Activated CD4-positive, alpha-beta memory T cell treated with anti-CD3 and anti-CD28 coated beads for 36 hours (primary cell): ENCODE measurements at regions of chr5 and their contacts with region 1.

Region 1: DNA sequence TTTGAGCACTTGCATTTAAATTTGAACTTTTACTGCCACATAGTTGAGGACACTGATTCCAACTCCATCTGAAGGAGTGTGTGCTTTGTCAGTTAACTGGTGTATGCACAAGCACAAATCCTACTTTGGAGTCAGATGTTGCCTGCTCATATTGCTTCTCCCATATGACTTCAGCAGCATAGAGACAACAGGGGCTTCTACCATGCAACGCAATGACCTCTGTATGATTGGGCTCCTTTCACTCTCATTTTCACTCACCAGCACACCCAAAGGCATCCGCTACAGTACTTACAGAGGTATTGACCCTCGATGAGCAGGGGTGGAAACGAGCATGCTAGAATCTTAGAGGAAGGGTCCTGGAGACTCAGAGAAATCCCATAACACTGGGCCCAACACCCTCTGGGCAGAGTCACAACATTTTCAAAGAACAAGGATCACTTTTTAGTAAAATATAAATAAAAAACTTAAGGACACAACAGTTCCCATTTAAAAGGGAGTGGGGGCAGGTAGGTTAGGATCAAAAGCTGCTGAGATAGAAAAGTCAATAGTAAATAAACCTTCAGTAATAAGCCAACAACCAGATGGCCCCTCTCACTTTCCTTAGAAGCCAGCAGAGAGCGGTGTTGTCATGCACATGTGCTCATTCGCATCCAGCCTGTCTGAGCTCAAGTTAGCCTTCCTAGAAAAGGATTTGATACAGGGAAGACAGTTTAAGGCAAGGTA is 203.8 kb downstream of the SNCAIP start:
- DNase-seq: peak; percentile 10
- H3K4me3 Mint-ChIP-seq: no peak overlapping the region
- H3K27ac Mint-ChIP-seq: no peak overlapping the region
- H3K4me1 Mint-ChIP-seq: no peaks in the 10 kb centered on the region
- H3K27me3 Mint-ChIP-seq: no peaks in the 10 kb centered on the region

Region 2: GRCh38 chr5:122392824-122393223 is 123.0 kb before region 1 on chr5:
- CTCF ChIA-PET with region 1: no interaction called
- POLR2A ChIA-PET with region 1: no interaction called
- intact Hi-C with region 1: no loop called
- DNase-seq: no peak
- H3K4me3 Mint-ChIP-seq: no peak overlapping the region
- H3K27ac Mint-ChIP-seq: no peak overlapping the region
- H3K4me1 Mint-ChIP-seq: no peaks in the 10 kb centered on the region
- H3K27me3 Mint-ChIP-seq: no peaks in the 10 kb centered on the region

Region 3: DNA sequence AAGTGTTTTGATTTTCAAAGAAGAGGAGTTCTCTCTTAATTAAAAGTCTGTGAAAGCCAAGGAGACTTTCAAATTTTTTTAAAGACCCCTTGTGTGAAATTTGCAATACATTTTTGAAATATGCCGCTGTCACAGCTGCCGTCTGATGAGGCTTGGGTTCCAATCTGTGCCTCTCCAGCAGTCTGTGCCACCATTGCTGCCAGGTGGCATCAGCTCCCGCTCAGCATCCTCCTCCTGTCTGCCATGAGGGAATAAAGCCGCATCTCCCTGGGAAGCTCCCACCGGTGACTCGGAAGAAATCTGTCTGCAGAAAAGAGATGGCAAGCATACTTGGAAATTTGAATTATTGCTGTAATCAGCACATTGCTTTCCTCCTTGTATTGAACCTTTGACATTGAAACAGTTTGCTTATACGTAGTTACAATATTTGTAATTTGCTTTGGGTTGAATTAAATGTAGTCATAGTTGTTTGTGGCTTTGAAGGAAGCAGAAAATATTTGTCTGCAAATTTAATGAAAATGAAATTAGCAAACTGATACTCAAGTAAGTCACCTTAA is 113.3 kb after region 1 on chr5:
- CTCF ChIA-PET with region 1: no interaction called
- POLR2A ChIA-PET with region 1: no interaction called
- intact Hi-C with region 1: no loop called
- DNase-seq: no peak
- H3K4me3 Mint-ChIP-seq: no peak overlapping the region
- H3K27ac Mint-ChIP-seq: no peak overlapping the region
- H3K4me1 Mint-ChIP-seq: no peaks in the 10 kb centered on the region
- H3K27me3 Mint-ChIP-seq: peaks cover 2% of the 10 kb centered on the region

Region 4: GRCh38 chr5:123371575-123372179 is 855.8 kb after region 1 on chr5:
- CTCF ChIA-PET with region 1: interaction called, 3 read pairs
- POLR2A ChIA-PET with region 1: no interaction called
- intact Hi-C with region 1: loop called (anchors 5 kb)
- DNase-seq: peak; percentile 34
- H3K4me3 Mint-ChIP-seq: no peak overlapping the region
- H3K27ac Mint-ChIP-seq: no peak overlapping the region
- H3K4me1 Mint-ChIP-seq: no peaks in the 10 kb centered on the region
- H3K27me3 Mint-ChIP-seq: no peaks in the 10 kb centered on the region